Caco-2 (cell line): ENCODE measurements at regions of chr6 and their contacts with region 1.

Region 1: DNA sequence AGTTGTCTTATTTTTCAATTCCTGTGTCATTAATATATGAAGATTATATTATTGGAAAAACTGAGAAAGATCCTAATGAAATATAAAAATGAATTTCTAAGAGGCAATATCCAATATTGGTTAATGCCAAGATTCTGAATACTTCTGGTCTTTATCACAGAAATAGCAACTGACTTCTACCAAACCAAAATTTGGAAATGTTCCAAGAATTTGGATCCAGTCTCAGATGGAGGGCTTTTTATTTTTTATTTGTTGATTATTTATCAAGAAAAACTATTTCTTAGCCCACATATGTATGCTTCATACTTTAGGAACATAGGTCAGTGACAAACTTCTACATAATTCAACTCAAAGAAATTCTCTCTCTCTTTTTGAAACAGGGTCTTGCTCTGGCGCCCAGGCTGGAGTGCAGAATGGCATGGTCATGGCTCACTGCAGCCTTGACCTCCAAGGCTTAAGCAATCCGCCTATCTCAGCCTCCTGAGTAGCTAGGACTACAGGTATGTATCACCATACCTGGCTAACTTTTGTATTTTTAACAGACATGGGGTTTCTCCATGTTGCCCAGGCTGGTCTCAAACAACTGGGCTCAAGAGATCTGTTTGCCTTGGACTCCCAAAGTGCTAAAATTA is 13.1 kb downstream of the NUP43 start:
- DNase-seq: no peak
- H3K4me3 ChIP-seq: no peak overlapping the region
- H3K4me3 Mint-ChIP-seq: no peak overlapping the region
- H3K27ac Mint-ChIP-seq: no peak overlapping the region
- H3K4me1 ChIP-seq: peaks cover 5% of the 10 kb centered on the region; the same call in 1 of the 2 replicates
- H3K4me1 Mint-ChIP-seq: peaks cover 7% of the 10 kb centered on the region
- H3K27me3 ChIP-seq: no peaks in the 10 kb centered on the region
- H3K27me3 Mint-ChIP-seq: no peaks in the 10 kb centered on the region
- CTCF ChIP-seq: no peak

Region 2: GRCh38 chr6:149717588-149718458 is 15.4 kb before region 1 on chr6 and contains the start of gene LATS1:
- CTCF ChIA-PET with region 1: no interaction called
- POLR2A ChIA-PET with region 1: interaction called, 10 read pairs
- intact Hi-C with region 1: no loop called
- DNase-seq: peak; percentile 85 to 90
- H3K4me3 ChIP-seq: peak within 1 kb of the TSS; percentile 94
- H3K4me3 Mint-ChIP-seq: peak within 1 kb of the TSS; percentile 93
- H3K27ac Mint-ChIP-seq: peak within 1 kb of the TSS; percentile 95
- H3K4me1 ChIP-seq: peaks cover 4% of the 10 kb centered on the region
- H3K4me1 Mint-ChIP-seq: peaks cover 7% of the 10 kb centered on the region
- H3K27me3 ChIP-seq: no peaks in the 10 kb centered on the region
- H3K27me3 Mint-ChIP-seq: no peaks in the 10 kb centered on the region
- CTCF ChIP-seq: no peak
- total RNA-seq, gene LATS1: 28.7 and 31.3 TPM in 2 replicates